CD8-positive, alpha-beta T cell (primary cell): ENCODE measurements at regions of chr7 and their contacts with region 1.

Region 1: DNA sequence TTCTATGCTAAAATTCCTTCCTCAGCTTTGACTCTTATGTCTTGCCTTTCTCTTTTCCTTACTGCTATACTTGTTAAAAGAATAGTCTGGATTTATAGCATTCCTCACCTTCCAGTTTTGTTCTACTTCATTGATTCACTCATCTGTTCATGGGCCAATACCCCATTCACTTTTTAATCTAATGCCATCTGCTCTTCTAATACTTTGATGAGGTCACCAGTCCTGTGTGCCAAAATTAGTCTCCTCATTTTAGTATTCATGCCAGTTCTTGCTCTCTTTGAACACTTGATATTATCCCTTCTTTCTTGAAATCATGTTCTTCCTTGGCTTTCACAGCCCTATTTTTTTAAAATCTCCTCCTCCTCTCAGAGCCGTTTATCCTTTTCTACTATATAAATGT is 19.4 kb downstream of the STK17A start:
- DNase-seq: no peak
- ATAC-seq: no peak
- H3K4me3 ChIP-seq: no peak overlapping the region
- H3K4me3 Mint-ChIP-seq: no peak overlapping the region
- H3K27ac ChIP-seq: peak overlapping the region in 1 of 2 experiments; percentile 40
- H3K27ac Mint-ChIP-seq: no peak overlapping the region
- H3K4me1 ChIP-seq: peaks cover 91% of the 10 kb centered on the region
- H3K4me1 Mint-ChIP-seq: peaks cover 50% of the 10 kb centered on the region
- H3K27me3 ChIP-seq: no peaks in the 10 kb centered on the region
- H3K27me3 Mint-ChIP-seq: no peaks in the 10 kb centered on the region
- CTCF ChIP-seq: no peak

Region 2: DNA sequence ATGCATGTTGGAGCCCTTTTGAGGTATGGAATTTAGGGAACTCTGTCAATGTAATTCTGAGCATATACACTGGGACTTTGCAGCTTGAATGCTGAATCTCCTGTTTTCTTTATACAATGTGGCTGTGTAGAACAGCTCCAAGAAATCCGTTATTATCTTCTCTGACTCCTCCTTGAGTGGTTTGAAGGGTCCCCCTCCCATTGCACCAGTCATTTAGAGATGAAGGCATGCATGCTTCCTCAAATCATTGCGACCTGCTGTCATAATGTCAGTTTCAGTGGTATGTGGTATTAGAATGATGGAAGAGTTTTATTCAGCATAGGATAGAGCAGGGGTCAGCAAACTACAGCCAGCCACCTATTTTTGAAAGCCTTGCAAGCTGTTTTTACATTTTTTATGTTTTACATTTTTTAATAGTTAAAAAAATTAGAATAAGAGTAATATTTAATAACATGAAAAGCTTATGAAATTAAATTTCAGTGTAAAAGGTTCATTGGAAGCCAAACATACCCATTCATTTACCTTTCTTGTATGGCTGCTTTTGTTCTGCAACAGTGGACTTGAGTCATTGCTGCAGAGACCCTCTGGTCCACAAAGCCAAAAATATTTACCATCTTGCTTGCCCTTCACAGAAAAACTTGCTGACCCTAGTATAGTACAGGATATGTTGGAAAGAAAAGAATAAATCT is 11.3 kb before region 1 on chr7:
- CTCF ChIA-PET with region 1: no interaction called
- POLR2A ChIA-PET with region 1: interaction called, 4 read pairs
- intact Hi-C with region 1: loop called in 1 of 2 experiments (anchors 1 kb)
- DNase-seq: peak in 1 of 9 experiments; percentile 43
- ATAC-seq: no peak
- H3K4me3 ChIP-seq: peak overlapping the region; percentile 12 to 21
- H3K4me3 Mint-ChIP-seq: peak overlapping the region; percentile 75
- H3K27ac ChIP-seq: peak overlapping the region; percentile 36 to 97
- H3K27ac Mint-ChIP-seq: peak overlapping the region; percentile 83
- H3K4me1 ChIP-seq: peaks cover 82% of the 10 kb centered on the region
- H3K4me1 Mint-ChIP-seq: peaks cover 80% of the 10 kb centered on the region
- H3K27me3 ChIP-seq: no peaks in the 10 kb centered on the region
- H3K27me3 Mint-ChIP-seq: no peaks in the 10 kb centered on the region
- CTCF ChIP-seq: no peak

Region 3: DNA sequence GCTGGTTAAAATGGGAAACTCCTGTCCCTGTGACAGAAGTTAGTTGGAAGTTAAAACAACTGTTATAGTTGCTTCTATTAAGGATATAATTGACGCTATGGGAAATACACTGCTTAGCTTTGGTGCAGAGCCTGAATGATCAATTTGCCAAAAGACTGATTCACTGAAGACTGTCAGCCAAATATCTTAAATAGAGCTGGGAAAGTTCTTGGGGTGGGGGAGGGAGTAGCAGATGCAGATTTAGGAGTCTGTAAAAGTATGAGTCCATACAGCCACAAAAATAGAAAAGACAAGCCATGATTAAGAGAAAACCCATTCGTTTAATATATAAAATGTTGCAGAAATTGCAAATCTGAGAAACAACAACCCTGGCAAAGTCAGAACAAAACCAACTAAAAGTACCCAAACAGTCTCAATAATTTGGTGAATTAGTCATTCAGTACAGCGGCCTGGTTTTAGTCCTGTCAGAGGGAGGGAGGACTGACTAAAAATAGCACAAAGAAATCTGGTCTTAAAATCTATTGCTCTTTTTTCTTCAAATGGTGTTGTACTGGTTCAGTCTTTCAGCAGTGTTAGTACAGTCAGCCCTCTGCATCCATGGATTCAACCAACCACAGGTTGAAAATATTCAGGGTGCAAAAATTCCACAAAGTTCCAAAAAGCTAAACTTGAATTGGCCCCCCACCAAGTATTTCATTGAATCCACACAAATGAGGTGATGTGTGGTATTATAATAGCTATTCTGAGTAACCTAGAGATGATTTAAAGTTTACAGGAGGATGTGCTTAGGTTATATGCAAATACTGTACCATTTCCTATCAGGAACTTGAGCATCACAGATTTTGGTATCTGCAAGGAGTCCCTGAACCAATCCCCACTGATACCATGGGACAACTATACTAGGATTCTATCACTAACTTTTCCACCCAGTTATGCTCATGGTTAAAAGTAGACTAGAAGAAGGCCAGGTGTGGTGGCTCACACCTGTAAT is 10.6 kb after region 1 on chr7:
- CTCF ChIA-PET with region 1: interaction called, 3 read pairs
- POLR2A ChIA-PET with region 1: interaction called, 5 read pairs
- intact Hi-C with region 1: loop called in 1 of 2 experiments (anchors 1 kb)
- DNase-seq: peak in 1 of 9 experiments; percentile 37
- ATAC-seq: peak; percentile 39
- H3K4me3 ChIP-seq: no peak overlapping the region
- H3K4me3 Mint-ChIP-seq: peak overlapping the region; percentile 40
- H3K27ac ChIP-seq: peak overlapping the region in 1 of 2 experiments; percentile 39
- H3K27ac Mint-ChIP-seq: peak overlapping the region; percentile 88
- H3K4me1 ChIP-seq: peaks cover 87% of the 10 kb centered on the region
- H3K4me1 Mint-ChIP-seq: peaks cover 72% of the 10 kb centered on the region
- H3K27me3 ChIP-seq: no peaks in the 10 kb centered on the region
- H3K27me3 Mint-ChIP-seq: no peaks in the 10 kb centered on the region
- CTCF ChIP-seq: no peak

Region 4: DNA sequence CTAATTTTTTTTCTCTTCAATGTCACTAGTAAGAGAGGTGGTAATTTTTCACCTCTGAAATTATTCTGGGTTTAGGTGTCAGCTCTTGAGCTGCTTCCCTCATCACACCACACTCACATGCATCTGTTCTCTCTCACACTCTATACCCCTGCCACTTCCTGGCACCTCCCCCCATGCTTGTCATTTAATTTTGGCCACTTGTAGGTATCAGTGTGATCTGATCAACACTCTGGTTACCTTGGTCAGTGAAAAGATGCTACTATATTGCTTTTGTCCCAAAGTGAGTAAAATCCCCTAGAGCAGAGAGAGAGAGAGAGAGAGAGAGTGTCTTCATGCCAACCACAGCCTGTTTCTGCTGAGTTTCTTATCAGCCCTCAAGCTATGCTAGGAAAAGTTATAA is 23.2 kb after region 1 on chr7:
- CTCF ChIA-PET with region 1: interaction called, 7 read pairs
- POLR2A ChIA-PET with region 1: interaction called, 32 read pairs
- intact Hi-C with region 1: loop called in 1 of 2 experiments (anchors 2 kb)
- DNase-seq: peak; percentile 25 to 94 (median 61)
- ATAC-seq: peak; percentile 74
- H3K4me3 ChIP-seq: no peak overlapping the region
- H3K4me3 Mint-ChIP-seq: peak overlapping the region; percentile 71
- H3K27ac ChIP-seq: peak overlapping the region; percentile 23 to 75
- H3K27ac Mint-ChIP-seq: peak overlapping the region; percentile 94
- H3K4me1 ChIP-seq: peaks cover 94% of the 10 kb centered on the region
- H3K4me1 Mint-ChIP-seq: peaks cover 94% of the 10 kb centered on the region
- H3K27me3 ChIP-seq: no peaks in the 10 kb centered on the region
- H3K27me3 Mint-ChIP-seq: no peaks in the 10 kb centered on the region
- CTCF ChIP-seq: no peak